Activated naive CD4-positive, alpha-beta T cell treated with anti-CD3 and anti-CD28 coated beads for 36 hours (primary cell): ENCODE measurements at regions of chr11 and their contacts with region 1.

Region 1: DNA sequence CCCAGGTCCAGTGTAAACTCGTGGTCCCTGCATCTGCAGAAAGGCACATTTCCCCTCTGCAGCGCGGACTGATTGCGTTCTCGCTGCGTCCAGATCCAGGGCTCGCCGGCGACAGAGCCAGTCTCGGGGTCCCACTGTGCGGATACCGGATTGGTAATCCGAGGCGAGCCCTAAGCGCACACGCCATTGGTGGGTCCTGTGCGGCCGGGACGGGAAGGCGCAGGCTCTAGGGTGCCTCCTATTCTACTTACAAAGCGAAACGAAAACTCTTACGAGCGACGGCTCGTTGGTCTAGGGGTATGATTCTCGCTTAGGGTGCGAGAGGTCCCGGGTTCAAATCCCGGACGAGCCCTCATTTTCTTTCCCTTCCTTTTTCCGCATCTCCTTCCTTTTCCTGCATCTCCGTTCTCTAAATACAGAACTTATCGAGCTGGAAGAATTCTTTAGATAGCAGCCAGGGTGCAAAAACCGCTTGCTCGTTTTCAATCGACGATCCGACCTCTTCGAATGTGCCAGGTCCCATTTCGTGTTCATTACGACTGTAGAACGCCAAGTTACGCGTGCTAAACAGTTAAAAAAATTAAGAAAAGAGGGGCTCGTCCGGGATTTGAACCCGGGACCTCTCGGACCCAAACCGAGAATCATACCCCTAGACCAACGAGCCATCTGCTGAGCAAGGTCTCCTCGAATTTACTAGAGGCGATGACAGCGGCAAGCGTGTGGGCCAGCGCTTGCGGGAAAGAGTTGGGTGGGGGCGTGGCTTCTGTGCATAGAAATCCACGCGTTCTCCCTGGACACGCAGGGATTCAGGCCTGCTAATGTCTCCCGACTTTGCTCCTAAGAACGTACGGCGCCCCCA is 29.2 kb upstream of the WNT11 start:
- DNase-seq: peak; percentile 96
- H3K4me3 Mint-ChIP-seq: peak overlapping the region; percentile 84
- H3K27ac Mint-ChIP-seq: peak overlapping the region; percentile 93
- H3K4me1 Mint-ChIP-seq: peaks cover 44% of the 10 kb centered on the region
- H3K27me3 Mint-ChIP-seq: peaks cover 3% of the 10 kb centered on the region

Region 2: DNA sequence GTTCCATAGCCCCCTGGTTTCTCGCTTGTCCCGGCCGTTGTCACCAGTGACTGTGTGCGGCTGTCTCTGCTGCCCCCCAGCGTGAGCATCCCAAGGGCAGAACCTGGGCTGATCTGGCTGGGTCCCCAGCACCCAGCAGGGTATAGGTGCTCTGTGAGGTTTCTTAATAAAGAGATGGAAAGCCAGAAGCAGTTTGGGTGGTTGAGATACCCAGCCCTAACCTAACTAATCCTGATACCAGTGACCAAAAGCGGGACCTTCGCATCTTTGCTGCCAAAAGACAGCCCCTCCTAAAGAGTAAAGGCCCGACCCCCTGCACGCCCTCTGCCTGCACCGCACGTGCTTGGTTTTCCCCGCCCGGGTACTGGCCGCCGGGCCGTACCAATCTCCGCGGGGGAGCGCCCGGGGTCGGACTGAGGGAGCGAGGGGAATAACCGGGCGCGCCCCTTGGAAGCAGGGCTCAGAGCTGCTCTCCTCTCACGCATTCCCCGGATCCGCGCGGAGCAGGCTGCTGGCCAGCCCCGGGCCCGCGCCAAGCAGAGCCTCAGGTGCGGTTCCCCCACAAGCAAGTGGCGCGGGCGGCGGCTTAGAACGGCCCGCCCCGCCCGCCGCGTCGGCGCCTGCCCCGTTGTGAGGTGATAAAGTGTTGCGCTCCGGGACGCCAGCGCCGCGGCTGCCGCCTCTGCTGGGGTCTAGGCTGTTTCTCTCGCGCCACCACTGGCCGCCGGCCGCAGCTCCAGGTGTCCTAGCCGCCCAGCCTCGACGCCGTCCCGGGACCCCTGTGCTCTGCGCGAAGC is 467.2 kb before region 1 on chr11 and contains the start of gene DGAT2:
- CTCF ChIA-PET with region 1: no interaction called
- intact Hi-C with region 1: loop called (anchors 2 kb)
- DNase-seq: peak; percentile 77
- H3K4me3 Mint-ChIP-seq: peak within 1 kb of the TSS; percentile 64
- H3K27ac Mint-ChIP-seq: no peak within 1 kb of the TSS
- H3K4me1 Mint-ChIP-seq: peaks cover 24% of the 10 kb centered on the region
- H3K27me3 Mint-ChIP-seq: peaks cover 4% of the 10 kb centered on the region
- total RNA-seq, gene DGAT2: 3.4 to 4.2 TPM

Region 3: GRCh38 chr11:76288166-76288980 is 52.9 kb after region 1 on chr11:
- CTCF ChIA-PET with region 1: interaction called, 7 read pairs
- intact Hi-C with region 1: loop called (anchors 2 kb)
- DNase-seq: peak; percentile 43
- H3K4me3 Mint-ChIP-seq: no peak overlapping the region
- H3K27ac Mint-ChIP-seq: peak overlapping the region; percentile 66
- H3K4me1 Mint-ChIP-seq: peaks cover 30% of the 10 kb centered on the region
- H3K27me3 Mint-ChIP-seq: no peaks in the 10 kb centered on the region

Region 4: GRCh38 chr11:76380967-76381719 is 145.7 kb after region 1 on chr11 and contains the starts of genes GVQW3 and THAP12:
- CTCF ChIA-PET with region 1: interaction called, 3 read pairs
- intact Hi-C with region 1: loop called (anchors 1 kb)
- DNase-seq: peak; percentile 97
- H3K4me3 Mint-ChIP-seq: peak within 1 kb of the TSS; percentile 91
- H3K27ac Mint-ChIP-seq: peak within 1 kb of the TSS; percentile 91
- H3K4me1 Mint-ChIP-seq: peaks cover 58% of the 10 kb centered on the region
- H3K27me3 Mint-ChIP-seq: no peaks in the 10 kb centered on the region
- total RNA-seq, gene GVQW3: 1.7 to 2.1 TPM
- total RNA-seq, gene THAP12: 39.4 to 40.6 TPM

Region 5: GRCh38 chr11:76860539-76861475 is 625.3 kb after region 1 on chr11 and contains the start of gene ACER3:
- CTCF ChIA-PET with region 1: no interaction called
- intact Hi-C with region 1: loop called (anchors 10 kb)
- DNase-seq: peak; percentile 85
- H3K4me3 Mint-ChIP-seq: peak within 1 kb of the TSS; percentile 87
- H3K27ac Mint-ChIP-seq: no peak within 1 kb of the TSS
- H3K4me1 Mint-ChIP-seq: peaks cover 14% of the 10 kb centered on the region
- H3K27me3 Mint-ChIP-seq: no peaks in the 10 kb centered on the region
- total RNA-seq, gene ACER3: 7.6 to 10.0 TPM